ENCODE measurements at regions of chr15 and their contacts with region 1.

Region 1: GRCh38 chr15:52735231-52736089 is 54.7 kb downstream of the ONECUT1 start:
- DNase-seq: peak; percentile 39 to 68
- H3K4me3 ChIP-seq: no peak overlapping the region
- H3K27ac ChIP-seq: no peak overlapping the region
- H3K4me1 ChIP-seq: no peaks in the 10 kb centered on the region
- H3K27me3 ChIP-seq: no peaks in the 10 kb centered on the region
- CTCF ChIP-seq: peak; percentile 79 to 86 (median 86)
- POLR2A ChIP-seq: no peak

Region 2: DNA sequence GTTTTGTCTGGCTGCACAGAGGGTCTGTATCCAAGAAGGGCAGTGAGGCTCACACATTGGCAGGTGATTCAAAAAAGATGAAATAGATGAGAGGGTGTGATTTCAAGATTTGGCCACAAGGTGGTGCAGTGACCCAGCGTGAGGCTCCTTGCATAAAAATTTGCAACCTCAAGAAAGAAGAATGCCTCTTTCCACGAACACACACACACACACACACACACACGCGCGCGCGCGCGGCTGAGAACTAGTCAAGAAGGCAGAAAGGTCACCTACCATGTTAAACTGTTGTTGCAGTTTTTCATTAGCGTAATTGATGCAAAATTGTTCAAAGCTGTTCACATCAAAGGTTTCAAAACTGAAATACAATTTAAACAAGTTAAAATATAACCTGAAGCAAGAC is 479.1 kb before region 1 on chr15:
- intact Hi-C with region 1: loop called (anchors 5 kb)
- DNase-seq: peak; percentile 65 to 71
- H3K4me3 ChIP-seq: no peak overlapping the region
- H3K27ac ChIP-seq: peak overlapping the region in 1 of 2 donors; percentile 19
- H3K4me1 ChIP-seq: peaks cover 0 to 4% of the 10 kb centered on the region in 2 donors
- H3K27me3 ChIP-seq: no peaks in the 10 kb centered on the region
- CTCF ChIP-seq: peak; percentile 76 to 79 (median 78)
- POLR2A ChIP-seq: no peak

Region 3: DNA sequence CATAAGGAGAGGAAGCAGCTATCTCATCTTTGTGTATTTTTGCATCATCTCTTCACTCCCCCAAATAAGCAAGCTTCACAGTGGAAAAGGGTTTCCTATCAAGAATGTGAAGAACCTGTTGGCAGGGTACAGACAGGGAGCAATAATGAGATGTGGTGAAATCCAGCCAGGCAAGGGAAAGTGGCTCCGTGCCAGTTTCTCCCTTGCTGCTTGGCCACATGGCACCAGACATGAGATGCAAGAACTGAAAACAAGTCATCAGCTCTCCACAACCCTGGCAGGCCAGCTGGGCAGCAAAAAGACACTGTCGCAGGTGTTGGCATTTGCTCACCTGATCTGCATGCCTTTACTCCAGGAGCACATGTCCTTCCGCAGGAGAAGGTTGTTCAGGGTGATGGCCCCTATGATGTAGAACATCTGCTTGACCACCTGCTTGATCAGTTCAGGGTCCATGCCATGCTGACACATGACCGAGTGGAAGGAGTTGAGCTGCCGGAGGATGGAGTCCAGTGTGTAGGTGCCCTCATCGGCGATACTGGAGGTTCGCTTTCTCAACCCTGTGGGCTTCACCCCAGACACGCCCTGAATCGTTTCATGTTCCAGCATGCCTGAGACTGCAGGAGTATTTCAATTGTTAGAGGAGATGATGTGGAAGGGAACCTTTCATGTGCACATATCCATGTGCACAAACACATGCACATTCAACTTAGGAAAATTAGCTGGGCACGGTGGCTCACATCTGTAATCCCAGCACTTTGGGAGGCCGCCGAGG is 416.5 kb before region 1 on chr15:
- intact Hi-C with region 1: no loop called
- DNase-seq: no peak
- H3K4me3 ChIP-seq: no peak overlapping the region
- H3K27ac ChIP-seq: no peak overlapping the region
- H3K4me1 ChIP-seq: no peaks in the 10 kb centered on the region
- H3K27me3 ChIP-seq: no peaks in the 10 kb centered on the region
- CTCF ChIP-seq: no peak
- POLR2A ChIP-seq: no peak

Region 4: GRCh38 chr15:52481915-52482314 is 253.5 kb before region 1 on chr15:
- intact Hi-C with region 1: no loop called
- DNase-seq: no peak
- H3K4me3 ChIP-seq: no peak overlapping the region
- H3K27ac ChIP-seq: no peak overlapping the region
- H3K4me1 ChIP-seq: no peaks in the 10 kb centered on the region
- H3K27me3 ChIP-seq: no peaks in the 10 kb centered on the region
- CTCF ChIP-seq: no peak
- POLR2A ChIP-seq: no peak